Heart right ventricle (tissue), 16 donors: ENCODE measurements at regions of chr3 and their contacts with region 1.

Region 1: DNA sequence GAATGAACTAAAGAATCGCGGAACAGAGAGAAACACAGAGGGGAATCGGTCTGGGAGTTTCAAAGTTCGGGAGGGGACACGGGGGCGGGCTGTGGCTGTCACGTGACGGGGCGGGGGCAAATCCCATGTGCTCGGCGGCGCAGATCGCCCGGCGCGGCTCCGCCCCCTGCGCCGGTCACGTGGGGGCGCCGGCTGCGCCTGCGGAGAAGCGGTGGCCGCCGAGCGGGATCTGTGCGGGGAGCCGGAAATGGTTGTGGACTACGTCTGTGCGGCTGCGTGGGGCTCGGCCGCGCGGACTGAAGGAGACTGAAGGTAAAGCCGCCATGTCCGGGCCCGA is at the start of gene EIF4G1:
- DNase-seq: peak; percentile 94 to 96
- ATAC-seq: peak; percentile 84 to 94 (median 88)
- H3K4me3 ChIP-seq: peak within 1 kb of the TSS; percentile 68 to 95 (median 85)
- H3K27ac ChIP-seq: peak within 1 kb of the TSS; percentile 96 to 100 (median 98)
- H3K4me1 ChIP-seq: peaks cover 24 to 48% (median 42%) of the 10 kb centered on the region in 9 donors
- H3K27me3 ChIP-seq: no peaks in the 10 kb centered on the region
- CTCF ChIP-seq: no peak
- total RNA-seq, gene EIF4G1: 203 to 316 (median 209) TPM

Region 2: GRCh38 chr3:183629546-183630301 is 684.6 kb before region 1 on chr3:
- intact Hi-C with region 1: loop called in 1 of 10 experiments (anchors 10 kb)
- DNase-seq: no peak
- ATAC-seq: peak; percentile 11 to 86 (median 38)
- H3K4me3 ChIP-seq: no peak overlapping the region
- H3K27ac ChIP-seq: peak overlapping the region in 9 of 10 donors; percentile 57 to 88 (median 81)
- H3K4me1 ChIP-seq: peaks cover 1 to 45% (median 20%) of the 10 kb centered on the region in 9 donors
- H3K27me3 ChIP-seq: no peaks in the 10 kb centered on the region
- CTCF ChIP-seq: no peak

Region 3: GRCh38 chr3:184154885-184155643 is 159.3 kb before region 1 on chr3 and contains the start of gene DVL3:
- intact Hi-C with region 1: loop called in 1 of 10 experiments (anchors 10 kb)
- DNase-seq: peak; percentile 74 to 82
- ATAC-seq: peak; percentile 59 to 93 (median 81)
- H3K4me3 ChIP-seq: peak within 1 kb of the TSS; percentile 87 to 99 (median 97)
- H3K27ac ChIP-seq: peak within 1 kb of the TSS; percentile 91 to 99 (median 96)
- H3K4me1 ChIP-seq: peaks cover 22 to 53% (median 42%) of the 10 kb centered on the region in 9 donors
- H3K27me3 ChIP-seq: no peaks in the 10 kb centered on the region
- CTCF ChIP-seq: no peak
- total RNA-seq, gene DVL3: 52.6 to 81.7 (median 68.6) TPM

Region 4: DNA sequence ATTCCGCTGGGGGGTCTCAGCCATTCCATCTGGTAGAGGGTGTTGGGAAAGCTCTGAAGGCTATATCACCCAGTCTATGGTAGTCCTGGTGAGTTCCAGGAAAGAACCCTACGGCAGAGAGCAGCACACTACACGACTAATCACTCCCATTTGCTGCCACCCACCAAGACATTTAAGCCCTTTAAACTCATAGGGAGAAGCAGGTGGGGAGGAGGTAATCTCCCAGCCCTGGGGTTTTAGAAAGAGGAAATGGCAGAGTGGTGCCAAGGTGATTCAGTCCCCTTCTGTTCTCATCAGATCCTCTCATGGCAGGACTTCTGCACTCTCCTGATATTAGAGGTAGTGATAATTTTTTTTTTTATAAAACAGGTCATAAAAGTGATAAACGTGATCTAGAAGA is 95.5 kb before region 1 on chr3:
- intact Hi-C with region 1: no loop called
- DNase-seq: no peak
- ATAC-seq: no peak
- H3K4me3 ChIP-seq: no peak overlapping the region
- H3K27ac ChIP-seq: no peak overlapping the region
- H3K4me1 ChIP-seq: peaks cover 0 to 7% (median 0%) of the 10 kb centered on the region in 9 donors
- H3K27me3 ChIP-seq: peaks cover 0 to 16% (median 7%) of the 10 kb centered on the region in 7 donors
- CTCF ChIP-seq: no peak

Region 5: DNA sequence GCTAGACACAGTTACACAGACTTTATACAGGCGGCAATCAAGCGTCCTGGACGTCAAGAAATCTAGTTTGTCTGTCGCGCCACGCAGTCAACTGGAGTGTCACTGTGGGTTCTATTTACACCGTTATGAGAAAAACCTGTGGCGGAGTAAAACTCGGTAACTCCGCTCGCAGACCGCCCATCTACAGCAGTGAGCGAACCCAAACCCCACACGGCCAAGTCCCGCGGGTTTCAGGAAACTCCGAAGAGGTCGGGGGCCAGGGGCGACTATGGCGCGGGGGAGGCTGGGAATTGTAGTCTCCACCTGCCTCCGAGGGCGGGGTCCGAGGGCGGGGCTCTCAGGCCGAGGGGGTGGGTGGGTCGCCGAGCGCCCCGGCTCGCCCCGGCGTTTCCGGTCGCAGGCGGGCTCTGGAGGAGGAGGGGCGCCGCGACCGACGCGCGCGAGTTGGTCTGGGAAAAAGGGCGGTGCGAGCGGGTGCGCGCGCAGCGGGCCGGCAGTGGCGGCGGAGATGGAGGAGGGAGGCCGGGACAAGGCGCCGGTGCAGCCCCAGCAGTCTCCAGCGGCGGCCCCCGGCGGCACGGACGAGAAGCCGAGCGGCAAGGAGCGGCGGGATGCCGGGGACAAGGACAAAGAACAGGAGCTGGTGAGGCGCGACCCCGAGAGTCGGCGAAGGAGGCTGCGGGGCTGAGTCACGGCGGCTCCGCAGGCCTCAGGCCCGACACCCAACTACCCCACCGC is 15.4 kb before region 1 on chr3 and contains the start of gene PSMD2:
- intact Hi-C with region 1: loop called in 1 of 10 experiments (anchors 2 kb)
- DNase-seq: peak; percentile 98
- ATAC-seq: peak; percentile 99 to 100 (median 99)
- H3K4me3 ChIP-seq: peak within 1 kb of the TSS; percentile 67 to 100 (median 92)
- H3K27ac ChIP-seq: peak within 1 kb of the TSS; percentile 46 to 93 (median 83)
- H3K4me1 ChIP-seq: peaks cover 5 to 24% (median 16%) of the 10 kb centered on the region in 9 donors
- H3K27me3 ChIP-seq: no peaks in the 10 kb centered on the region
- CTCF ChIP-seq: no peak
- total RNA-seq, gene PSMD2: 210 to 254 (median 231) TPM

Region 6: DNA sequence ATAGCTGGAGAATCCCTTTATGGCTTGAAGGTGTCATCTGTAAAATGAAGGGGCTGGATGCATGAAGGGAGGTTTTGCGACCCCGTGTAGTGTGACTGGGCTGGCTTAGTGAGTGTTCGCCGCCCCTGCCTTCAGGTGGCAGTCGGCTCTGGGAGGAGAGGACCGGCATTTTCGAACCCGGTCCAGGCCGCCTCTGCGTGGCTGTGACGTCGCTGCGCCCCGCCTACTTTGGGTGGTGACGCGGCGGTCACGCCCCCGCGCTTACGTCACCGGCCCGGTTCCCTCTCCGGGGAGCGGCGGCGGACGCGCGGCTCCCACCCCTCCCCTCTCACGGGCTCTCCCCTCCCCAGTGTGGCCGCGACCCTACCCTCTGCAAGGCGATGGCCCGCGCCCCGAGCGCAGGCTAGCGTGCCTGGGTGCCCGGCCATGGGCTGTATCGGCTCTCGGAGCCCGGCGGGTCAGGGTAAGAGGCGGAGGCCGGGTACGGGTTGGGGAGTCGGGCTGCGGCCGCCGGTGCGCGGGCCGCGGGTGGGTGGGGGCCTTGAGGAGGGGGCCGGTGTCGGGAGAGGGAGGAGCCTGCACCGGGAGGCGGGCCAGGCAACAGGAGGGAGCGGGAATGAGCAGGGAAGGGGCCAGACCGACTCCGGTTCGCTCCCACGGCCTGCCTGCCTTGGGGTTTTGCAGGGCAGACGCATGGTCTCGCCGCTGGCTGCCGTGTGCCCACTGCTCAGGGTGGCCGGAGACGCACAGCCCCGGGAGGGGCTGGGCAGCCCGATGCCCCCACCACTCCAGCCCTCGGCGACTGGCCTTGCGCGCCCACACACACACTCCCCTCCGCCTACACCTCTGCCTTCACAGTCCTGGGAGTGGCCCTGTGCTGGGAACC is 21.6 kb after region 1 on chr3:
- intact Hi-C with region 1: loop called in 2 of 10 experiments (anchors 2 kb)
- DNase-seq: peak; percentile 88 to 91
- ATAC-seq: peak; percentile 63 to 75 (median 68)
- H3K4me3 ChIP-seq: peak overlapping the region; percentile 51 to 96 (median 82)
- H3K27ac ChIP-seq: peak overlapping the region; percentile 81 to 99 (median 96)
- H3K4me1 ChIP-seq: peaks cover 18 to 65% (median 45%) of the 10 kb centered on the region in 9 donors
- H3K27me3 ChIP-seq: no peaks in the 10 kb centered on the region
- CTCF ChIP-seq: no peak

Region 7: DNA sequence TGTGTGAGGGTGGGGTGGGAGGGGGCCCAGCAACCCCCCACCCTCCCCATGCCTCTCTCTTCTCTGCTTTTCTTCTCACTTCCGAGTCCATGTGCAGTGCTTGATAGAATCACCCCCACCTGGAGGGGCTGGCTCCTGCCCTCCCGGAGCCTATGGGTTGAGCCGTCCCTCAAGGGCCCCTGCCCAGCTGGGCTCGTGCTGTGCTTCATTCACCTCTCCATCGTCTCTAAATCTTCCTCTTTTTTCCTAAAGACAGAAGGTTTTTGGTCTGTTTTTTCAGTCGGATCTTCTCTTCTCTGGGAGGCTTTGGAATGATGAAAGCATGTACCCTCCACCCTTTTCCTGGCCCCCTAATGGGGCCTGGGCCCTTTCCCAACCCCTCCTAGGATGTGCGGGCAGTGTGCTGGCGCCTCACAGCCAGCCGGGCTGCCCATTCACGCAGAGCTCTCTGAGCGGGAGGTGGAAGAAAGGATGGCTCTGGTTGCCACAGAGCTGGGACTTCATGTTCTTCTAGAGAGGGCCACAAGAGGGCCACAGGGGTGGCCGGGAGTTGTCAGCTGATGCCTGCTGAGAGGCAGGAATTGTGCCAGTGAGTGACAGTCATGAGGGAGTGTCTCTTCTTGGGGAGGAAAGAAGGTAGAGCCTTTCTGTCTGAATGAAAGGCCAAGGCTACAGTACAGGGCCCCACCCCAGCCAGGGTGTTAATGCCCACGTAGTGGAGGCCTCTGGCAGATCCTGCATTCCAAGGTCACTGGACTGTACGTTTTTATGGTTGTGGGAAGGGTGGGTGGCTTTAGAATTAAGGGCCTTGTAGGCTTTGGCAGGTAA is 31.2 kb after region 1 on chr3:
- intact Hi-C with region 1: loop called in 2 of 10 experiments (anchors 5 to 10 kb)
- DNase-seq: peak; percentile 46 to 67
- ATAC-seq: peak; percentile 50 to 87 (median 74)
- H3K4me3 ChIP-seq: no peak overlapping the region
- H3K27ac ChIP-seq: peak overlapping the region in 4 of 10 donors; percentile 22 to 46 (median 40)
- H3K4me1 ChIP-seq: peaks cover 0 to 23% (median 8%) of the 10 kb centered on the region in 9 donors
- H3K27me3 ChIP-seq: no peaks in the 10 kb centered on the region
- CTCF ChIP-seq: peak in 7 of 9 donors; percentile 33 to 59 (median 55)

Region 8: GRCh38 chr3:184676927-184677326 is 362.6 kb after region 1 on chr3:
- intact Hi-C with region 1: no loop called
- DNase-seq: no peak
- ATAC-seq: peak in 3 of 8 donors; percentile 19 to 35 (median 28)
- H3K4me3 ChIP-seq: no peak overlapping the region
- H3K27ac ChIP-seq: no peak overlapping the region
- H3K4me1 ChIP-seq: peaks cover 0 to 32% (median 12%) of the 10 kb centered on the region in 9 donors
- H3K27me3 ChIP-seq: no peaks in the 10 kb centered on the region
- CTCF ChIP-seq: no peak